K562 (cell line): ENCODE measurements at regions of chr19 and their contacts with region 1.

Region 1: GRCh38 chr19:14536926-14537692 is 7.7 kb downstream of the TECR start:
- DNase-seq: peak; percentile 93 to 97 (median 96)
- ATAC-seq: peak; percentile 93
- H3K4me3 ChIP-seq: peak overlapping the region; percentile 45
- H3K27ac ChIP-seq: peak overlapping the region; percentile 77
- H3K4me1 ChIP-seq: peaks cover 23 to 38% of the 10 kb centered on the region in 2 experiments; a peak in 4 of 5 replicates
- H3K27me3 ChIP-seq: no peaks in the 10 kb centered on the region
- CTCF ChIP-seq: no peak
- EP300 ChIP-seq: peak; percentile 48; the same call in 1 of the 2 replicates
- POLR2A ChIP-seq: peak; percentile 46; the same call in 1 of the 2 replicates
- RAD21 ChIP-seq: no peak

Region 2: GRCh38 chr19:14550201-14550784 is 13.2 kb after region 1 on chr19:
- CTCF ChIA-PET with region 1: no interaction called
- POLR2A ChIA-PET with region 1: interaction called, 8 read pairs
- in situ Hi-C with region 1: no loop called
- intact Hi-C with region 1: loop called (anchors 2 kb)
- DNase-seq: peak; percentile 57 to 86 (median 69)
- ATAC-seq: peak; percentile 81
- H3K4me3 ChIP-seq: no peak overlapping the region
- H3K27ac ChIP-seq: peak overlapping the region; percentile 69
- H3K4me1 ChIP-seq: peaks cover 23 to 54% of the 10 kb centered on the region in 2 experiments
- H3K27me3 ChIP-seq: no peaks in the 10 kb centered on the region
- CTCF ChIP-seq: peak in 2 of 3 experiments; percentile 13 to 33; a peak in 1 of 6 replicates
- EP300 ChIP-seq: peak; percentile 26; the same call in 1 of the 2 replicates
- POLR2A ChIP-seq: no peak
- RAD21 ChIP-seq: peak in 1 of 2 experiments; percentile 36; a peak in 1 of 4 replicates

Region 3: DNA sequence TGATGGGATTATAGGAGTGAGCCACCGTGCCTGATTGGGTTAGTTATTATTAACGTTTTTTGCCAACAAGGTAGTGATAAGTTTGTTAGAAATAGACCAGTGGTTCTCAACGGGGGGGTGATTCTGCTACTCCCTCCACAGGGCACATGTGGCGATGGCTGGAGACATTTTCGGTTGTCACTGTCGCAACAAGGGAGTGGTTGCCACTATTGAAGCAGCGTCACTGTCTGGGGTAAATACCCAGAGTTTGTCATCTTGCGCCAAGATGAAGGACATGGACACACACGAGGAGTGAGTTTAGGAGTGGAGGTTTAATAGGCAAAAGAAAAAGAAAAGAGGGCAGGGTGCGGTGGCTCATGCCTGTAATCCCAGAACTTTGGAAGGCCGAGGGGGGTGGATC is 118.6 kb after region 1 on chr19:
- CTCF ChIA-PET with region 1: no interaction called
- POLR2A ChIA-PET with region 1: no interaction called
- in situ Hi-C with region 1: no loop called
- intact Hi-C with region 1: no loop called
- DNase-seq: no peak
- ATAC-seq: no peak
- H3K4me3 ChIP-seq: no peak overlapping the region
- H3K27ac ChIP-seq: no peak overlapping the region
- H3K4me1 ChIP-seq: no peaks in the 10 kb centered on the region
- H3K27me3 ChIP-seq: peaks cover 17 to 27% of the 10 kb centered on the region in 2 experiments
- CTCF ChIP-seq: no peak
- EP300 ChIP-seq: no peak
- POLR2A ChIP-seq: no peak
- RAD21 ChIP-seq: no peak